CD8-positive, alpha-beta memory T cell (primary cell): ENCODE measurements at regions of chr17 and their contacts with region 1.

Region 1: GRCh38 chr17:75845049-75845860 is 1.1 kb upstream of the UNC13D start:
- DNase-seq: peak in 4 of 5 donors; percentile 37 to 70 (median 42)
- H3K4me3 ChIP-seq: no peak overlapping the region
- H3K4me3 Mint-ChIP-seq: peak overlapping the region; percentile 16 to 84 (median 46)
- H3K27ac ChIP-seq: peak overlapping the region; percentile 89
- H3K27ac Mint-ChIP-seq: peak overlapping the region; percentile 30 to 89 (median 66)
- H3K4me1 ChIP-seq: peaks cover 36% of the 10 kb centered on the region
- H3K4me1 Mint-ChIP-seq: peaks cover 16 to 36% (median 17%) of the 10 kb centered on the region in 3 donors
- H3K27me3 ChIP-seq: no peaks in the 10 kb centered on the region
- H3K27me3 Mint-ChIP-seq: no peaks in the 10 kb centered on the region

Region 2: DNA sequence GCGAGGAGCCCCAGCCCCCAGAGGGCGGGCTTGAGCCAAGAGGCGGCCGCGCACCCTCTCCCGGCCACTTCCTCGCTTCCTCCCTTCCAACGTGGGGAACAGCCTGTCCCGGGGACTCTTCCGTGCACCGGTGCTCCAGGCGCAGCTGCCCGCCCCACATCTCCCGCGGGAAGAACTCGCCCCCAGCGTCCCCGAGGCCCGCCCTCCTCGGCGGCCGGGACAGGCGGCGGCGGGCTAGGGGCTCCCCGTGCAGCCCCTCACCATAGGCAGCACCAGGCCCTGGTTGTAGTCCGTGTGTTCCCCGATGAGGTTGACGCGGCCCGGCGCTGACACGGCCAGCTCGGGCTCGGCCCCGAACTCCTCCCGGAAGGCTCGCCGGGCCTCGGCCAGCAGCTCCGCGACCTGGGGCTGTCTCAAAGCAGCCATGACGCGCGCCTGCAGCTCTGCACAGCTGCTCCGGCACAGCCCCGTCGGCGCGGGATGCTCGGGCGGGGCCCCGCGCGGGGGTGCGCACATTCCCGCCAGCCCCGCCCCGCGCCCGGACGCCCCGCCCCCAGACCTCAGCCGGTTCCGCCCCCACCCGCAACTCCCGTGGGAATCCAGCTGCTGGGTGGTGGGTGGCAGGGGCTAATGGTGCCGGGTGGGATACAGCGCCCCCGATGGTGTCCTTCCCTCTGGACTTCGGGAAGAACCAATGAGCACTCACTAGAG is 80.4 kb before region 1 on chr17 and contains the start of gene GALK1:
- CTCF ChIA-PET with region 1: interaction called, 31 read pairs
- POLR2A ChIA-PET with region 1: interaction called, 5 read pairs
- DNase-seq: peak; percentile 66 to 81 (median 68)
- H3K4me3 ChIP-seq: peak within 1 kb of the TSS; percentile 64
- H3K4me3 Mint-ChIP-seq: peak within 1 kb of the TSS; percentile 65 to 90 (median 74)
- H3K27ac ChIP-seq: peak within 1 kb of the TSS; percentile 61
- H3K27ac Mint-ChIP-seq: peak within 1 kb of the TSS; percentile 23 to 92 (median 64)
- H3K4me1 ChIP-seq: peaks cover 13% of the 10 kb centered on the region
- H3K4me1 Mint-ChIP-seq: peaks cover 9 to 27% (median 12%) of the 10 kb centered on the region in 3 donors
- H3K27me3 ChIP-seq: no peaks in the 10 kb centered on the region
- H3K27me3 Mint-ChIP-seq: no peaks in the 10 kb centered on the region
- total RNA-seq, gene GALK1: 33.2 to 39.7 TPM

Region 3: GRCh38 chr17:75784473-75785015 is 60.7 kb before region 1 on chr17 and contains the start of gene UNK:
- CTCF ChIA-PET with region 1: interaction called, 9 read pairs
- POLR2A ChIA-PET with region 1: interaction called, 13 read pairs
- DNase-seq: peak; percentile 89 to 98 (median 97)
- H3K4me3 ChIP-seq: peak within 1 kb of the TSS; percentile 67
- H3K4me3 Mint-ChIP-seq: peak within 1 kb of the TSS; percentile 93 to 97 (median 93)
- H3K27ac ChIP-seq: peak within 1 kb of the TSS; percentile 98
- H3K27ac Mint-ChIP-seq: peak within 1 kb of the TSS; percentile 99 to 100 (median 100)
- H3K4me1 ChIP-seq: peaks cover 46% of the 10 kb centered on the region
- H3K4me1 Mint-ChIP-seq: peaks cover 39 to 70% (median 51%) of the 10 kb centered on the region in 3 donors
- H3K27me3 ChIP-seq: no peaks in the 10 kb centered on the region
- H3K27me3 Mint-ChIP-seq: peaks cover 0 to 6% of the 10 kb centered on the region in 2 donors
- total RNA-seq, gene UNK: 24.4 to 29.3 TPM

Region 4: GRCh38 chr17:75864448-75864871 is 19.2 kb after region 1 on chr17:
- CTCF ChIA-PET with region 1: interaction called, 14 read pairs
- POLR2A ChIA-PET with region 1: interaction called, 3 read pairs
- DNase-seq: peak; percentile 19 to 66 (median 47)
- H3K4me3 ChIP-seq: peak overlapping the region; percentile 5
- H3K4me3 Mint-ChIP-seq: peak overlapping the region; percentile 33 to 79 (median 69)
- H3K27ac ChIP-seq: peak overlapping the region; percentile 71
- H3K27ac Mint-ChIP-seq: peak overlapping the region; percentile 85 to 99 (median 92)
- H3K4me1 ChIP-seq: peaks cover 16% of the 10 kb centered on the region
- H3K4me1 Mint-ChIP-seq: peaks cover 22 to 30% (median 26%) of the 10 kb centered on the region in 3 donors
- H3K27me3 ChIP-seq: no peaks in the 10 kb centered on the region
- H3K27me3 Mint-ChIP-seq: peaks cover 0 to 2% of the 10 kb centered on the region in 2 donors

Region 5: GRCh38 chr17:75896415-75897159 is 51.3 kb after region 1 on chr17 and contains the start of gene TRIM65:
- CTCF ChIA-PET with region 1: interaction called, 19 read pairs
- POLR2A ChIA-PET with region 1: interaction called, 6 read pairs
- DNase-seq: peak; percentile 67 to 84 (median 71)
- H3K4me3 ChIP-seq: peak within 1 kb of the TSS; percentile 66
- H3K4me3 Mint-ChIP-seq: peak within 1 kb of the TSS; percentile 82 to 92 (median 85)
- H3K27ac ChIP-seq: peak within 1 kb of the TSS; percentile 61
- H3K27ac Mint-ChIP-seq: peak within 1 kb of the TSS; percentile 67 to 97 (median 85)
- H3K4me1 ChIP-seq: peaks cover 18% of the 10 kb centered on the region
- H3K4me1 Mint-ChIP-seq: peaks cover 25 to 31% (median 26%) of the 10 kb centered on the region in 3 donors
- H3K27me3 ChIP-seq: no peaks in the 10 kb centered on the region
- H3K27me3 Mint-ChIP-seq: no peaks in the 10 kb centered on the region
- total RNA-seq, gene TRIM65: 34.9 to 35.4 TPM